Heart left ventricle (tissue), 16 donors: ENCODE measurements at regions of chr1 and their contacts with region 1.

Region 1: DNA sequence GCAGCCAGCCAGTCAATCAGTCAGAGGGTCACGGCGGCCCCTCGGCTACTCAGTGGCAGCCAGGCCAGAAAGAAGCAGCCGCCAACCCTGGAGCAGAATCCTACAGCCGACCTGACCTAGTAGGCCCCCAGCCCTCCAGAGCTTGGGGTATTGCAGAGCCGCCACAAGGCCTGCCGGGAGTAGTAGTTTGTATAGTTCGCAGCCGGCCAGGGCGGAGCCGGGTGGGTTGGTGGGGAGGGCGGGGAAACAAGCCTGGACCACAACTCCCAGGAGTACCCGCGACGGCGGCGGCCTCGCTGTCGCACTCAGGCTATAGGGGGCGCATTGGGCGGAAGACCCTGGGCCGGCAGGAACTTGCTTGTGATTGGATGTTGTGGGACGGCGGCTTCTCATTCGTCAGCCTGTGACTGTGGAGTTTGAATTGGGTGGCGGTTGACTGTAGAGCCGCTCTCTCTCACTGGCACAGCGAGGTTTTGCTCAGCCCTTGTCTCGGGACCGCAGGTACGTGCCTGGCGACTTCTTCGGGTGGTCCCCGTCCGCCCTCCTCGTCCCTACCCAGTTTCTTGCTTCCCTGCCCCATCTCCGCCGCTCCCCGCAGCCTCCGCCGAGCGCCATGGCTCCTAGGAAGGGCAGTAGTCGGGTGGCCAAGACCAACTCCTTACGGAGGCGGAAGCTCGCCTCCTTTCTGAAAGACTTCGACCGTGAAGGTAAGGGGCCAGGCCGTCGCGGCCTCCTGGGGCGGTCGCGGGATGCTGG is at the start of gene CDCA8:
- DNase-seq: peak; percentile 98 to 99 (median 98)
- ATAC-seq: peak; percentile 95 to 97 (median 96)
- H3K4me3 ChIP-seq: peak within 1 kb of the TSS; percentile 52 to 98 (median 80)
- H3K27ac ChIP-seq: peak within 1 kb of the TSS in 11 of 12 donors; percentile 67 to 92 (median 78)
- H3K4me1 ChIP-seq: peaks cover 11 to 39% (median 27%) of the 10 kb centered on the region in 12 donors
- H3K27me3 ChIP-seq: no peaks in the 10 kb centered on the region
- CTCF ChIP-seq: peak; percentile 31 to 95 (median 68)
- POLR2A ChIP-seq: peak in 1 of 2 donors; percentile 55
- total RNA-seq, gene CDCA8: 0.12 to 5.0 (median 0.36) TPM in 8 of 9 donors, not detected in the other

Region 2: DNA sequence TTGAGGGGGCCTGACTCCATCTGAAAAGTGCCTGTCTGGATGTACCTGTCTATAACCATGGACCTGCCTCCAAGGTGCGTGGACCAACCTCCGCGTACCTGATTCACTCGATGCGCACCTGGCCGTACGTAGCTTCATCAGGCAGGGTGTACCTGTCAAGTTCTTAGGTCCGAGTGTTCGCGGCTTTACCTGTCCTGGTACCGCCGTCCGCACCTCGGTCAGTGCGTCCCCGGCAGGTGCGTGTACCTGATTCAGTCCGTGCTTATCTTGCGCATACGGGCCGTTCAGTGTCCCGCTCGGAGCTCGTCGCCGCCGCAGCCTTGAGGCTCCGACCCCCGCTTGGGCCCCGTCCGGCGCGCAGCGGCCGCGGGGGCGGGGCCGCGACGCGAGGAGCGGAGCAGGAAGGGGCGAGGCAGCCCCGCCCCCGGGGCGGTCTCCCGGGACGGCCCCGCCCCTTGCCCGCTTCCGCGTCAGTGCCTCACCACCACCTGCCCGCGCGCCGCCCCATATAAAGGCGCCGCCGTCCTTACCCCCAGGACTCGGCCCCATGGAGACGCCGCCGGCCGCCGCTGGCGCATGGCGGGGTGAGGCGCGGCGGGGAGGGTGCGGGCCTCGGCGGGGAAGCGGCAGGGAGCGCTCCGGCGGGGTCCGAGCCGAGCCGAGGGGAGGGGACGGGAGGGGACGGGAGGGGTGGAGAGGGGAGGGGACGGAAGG is 218.1 kb before region 1 on chr1 and contains the start of gene ZC3H12A:
- intact Hi-C with region 1: loop called in 1 of 10 experiments (anchors 5 kb)
- DNase-seq: peak; percentile 90 to 95 (median 92)
- ATAC-seq: peak; percentile 77 to 90 (median 82)
- H3K4me3 ChIP-seq: peak within 1 kb of the TSS; percentile 60 to 93 (median 85)
- H3K27ac ChIP-seq: peak within 1 kb of the TSS; percentile 59 to 96 (median 94)
- H3K4me1 ChIP-seq: peaks cover 20 to 85% (median 65%) of the 10 kb centered on the region in 12 donors
- H3K27me3 ChIP-seq: no peaks in the 10 kb centered on the region
- CTCF ChIP-seq: no peak
- POLR2A ChIP-seq: peak; percentile 63 to 98
- total RNA-seq, gene ZC3H12A: 1.8 to 8.5 (median 4.5) TPM

Region 3: GRCh38 chr1:37595440-37596319 is 96.6 kb before region 1 on chr1 and contains the start of gene GNL2:
- intact Hi-C with region 1: loop called in 1 of 10 experiments (anchors 5 kb)
- DNase-seq: peak; percentile 97 to 99 (median 98)
- ATAC-seq: peak; percentile 100
- H3K4me3 ChIP-seq: peak within 1 kb of the TSS; percentile 61 to 88 (median 74)
- H3K27ac ChIP-seq: peak within 1 kb of the TSS in 11 of 12 donors; percentile 50 to 84 (median 75)
- H3K4me1 ChIP-seq: peaks cover 2 to 24% (median 16%) of the 10 kb centered on the region in 12 donors
- H3K27me3 ChIP-seq: no peaks in the 10 kb centered on the region
- CTCF ChIP-seq: no peak
- POLR2A ChIP-seq: peak in 1 of 2 donors; percentile 78
- total RNA-seq, gene GNL2: 19.4 to 29.7 (median 23.8) TPM

Region 4: GRCh38 chr1:37793773-37794371 is 101.6 kb after region 1 on chr1 and contains the start of gene MANEAL:
- intact Hi-C with region 1: loop called in 1 of 10 experiments (anchors 10 kb)
- DNase-seq: peak; percentile 33 to 67 (median 42)
- ATAC-seq: peak; percentile 45 to 90 (median 82)
- H3K4me3 ChIP-seq: peak within 1 kb of the TSS; percentile 25 to 76 (median 58)
- H3K27ac ChIP-seq: no peak within 1 kb of the TSS
- H3K4me1 ChIP-seq: peaks cover 0 to 20% (median 13%) of the 10 kb centered on the region in 12 donors
- H3K27me3 ChIP-seq: peaks cover 0 to 18% (median under 1%) of the 10 kb centered on the region in 9 donors
- CTCF ChIP-seq: no peak
- POLR2A ChIP-seq: no peak
- total RNA-seq, gene MANEAL: 0.63 to 2.9 (median 1.1) TPM

Region 5: DNA sequence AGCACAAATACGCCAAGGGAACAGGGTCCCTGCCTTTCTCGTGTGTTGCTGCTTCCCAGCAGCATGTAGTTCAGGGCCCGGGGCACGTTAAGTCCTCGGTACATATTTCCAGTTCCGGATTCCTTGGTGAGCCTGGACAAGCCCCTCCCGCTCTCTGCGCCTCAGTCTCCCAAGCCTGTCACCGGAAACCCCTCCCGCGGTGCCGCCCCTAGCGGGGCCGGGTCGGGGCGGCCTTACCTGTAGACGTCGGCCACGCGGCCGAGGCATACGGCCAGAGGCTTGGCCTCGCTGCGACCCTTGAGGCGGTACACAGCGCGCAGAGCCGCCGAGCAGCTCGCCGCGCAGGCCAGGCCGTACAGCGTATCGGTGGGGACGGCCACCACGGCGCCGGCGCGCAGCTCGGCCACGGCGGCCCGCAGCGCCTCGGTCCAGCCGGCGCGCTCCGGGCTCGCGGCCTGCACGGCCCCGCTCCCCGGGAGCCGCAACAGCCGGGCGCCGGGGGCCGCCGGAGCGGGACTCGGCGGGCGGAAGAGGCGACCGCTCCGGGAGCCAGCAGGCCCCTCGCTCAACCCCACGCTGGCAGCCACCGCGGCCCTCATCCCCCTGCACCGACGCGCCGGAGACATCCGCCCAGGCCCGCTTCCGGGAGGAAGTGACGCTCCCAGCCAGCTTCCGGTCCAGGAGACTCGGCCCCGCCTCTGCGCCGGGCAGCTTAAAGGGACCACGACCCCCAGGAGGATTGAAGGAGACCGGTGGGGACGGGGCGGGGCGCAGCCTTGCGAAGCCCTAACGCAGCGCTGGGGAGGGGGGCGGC is 115.5 kb after region 1 on chr1 and contains the starts of genes C1orf122 and YRDC:
- intact Hi-C with region 1: loop called in 6 of 10 experiments (anchors 5 to 10 kb)
- DNase-seq: peak; percentile 94 to 97 (median 96)
- ATAC-seq: peak; percentile 91 to 96 (median 96)
- H3K4me3 ChIP-seq: peak within 1 kb of the TSS; percentile 72 to 99 (median 91)
- H3K27ac ChIP-seq: peak within 1 kb of the TSS; percentile 90 to 99 (median 96)
- H3K4me1 ChIP-seq: peaks cover 8 to 41% (median 28%) of the 10 kb centered on the region in 12 donors
- H3K27me3 ChIP-seq: no peaks in the 10 kb centered on the region
- CTCF ChIP-seq: no peak
- POLR2A ChIP-seq: peak in 1 of 2 donors; percentile 72
- total RNA-seq, gene C1orf122: 29.1 to 93.0 (median 44.0) TPM
- total RNA-seq, gene YRDC: 4.0 to 8.9 (median 6.1) TPM

Region 6: DNA sequence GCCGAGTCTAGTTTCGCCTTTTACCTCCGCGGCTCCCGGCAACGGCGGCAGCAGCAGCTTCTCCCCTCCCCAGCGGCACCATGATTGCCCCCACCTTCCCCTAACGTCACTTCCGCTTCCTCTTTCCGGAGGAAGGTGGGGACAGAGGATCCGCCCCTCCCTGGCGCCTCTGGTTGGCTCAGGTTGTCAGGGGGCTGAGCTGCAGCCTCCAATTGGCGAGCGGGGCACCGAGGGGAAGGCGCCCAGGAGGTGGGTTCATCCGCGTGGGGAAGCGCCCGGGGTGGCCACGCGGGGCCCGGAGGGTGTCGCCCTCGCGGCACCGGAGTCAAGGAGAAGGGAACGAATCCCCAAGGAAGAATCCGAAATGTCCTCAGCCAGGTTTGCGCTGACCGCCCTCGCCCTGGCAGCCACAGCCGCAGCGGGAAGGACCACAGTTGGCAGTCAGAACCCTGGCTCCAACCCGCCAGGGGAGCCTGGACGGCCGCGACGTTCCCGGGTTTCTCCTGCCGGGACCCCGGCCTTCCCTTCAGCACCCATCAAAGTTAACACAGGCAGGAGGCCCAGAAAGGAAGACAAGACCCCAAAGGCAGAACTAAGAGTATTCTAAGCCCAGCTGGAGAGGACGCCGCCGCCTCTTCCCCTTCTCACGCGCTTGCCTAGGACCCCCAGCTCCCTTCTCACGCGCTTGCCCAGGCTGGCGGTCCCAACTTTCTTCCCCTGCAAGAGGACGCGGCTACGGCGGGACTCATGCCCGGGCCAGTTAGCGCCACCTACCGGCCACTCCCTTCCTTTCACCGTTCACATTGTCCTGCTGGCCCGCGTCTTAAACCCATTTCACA is 167.5 kb after region 1 on chr1 and contains the start of gene MTF1:
- intact Hi-C with region 1: loop called in 6 of 10 experiments (anchors 1 to 10 kb)
- DNase-seq: peak; percentile 98 to 99 (median 98)
- ATAC-seq: peak; percentile 99
- H3K4me3 ChIP-seq: peak within 1 kb of the TSS; percentile 60 to 98 (median 86)
- H3K27ac ChIP-seq: peak within 1 kb of the TSS; percentile 22 to 97 (median 93)
- H3K4me1 ChIP-seq: peaks cover 0 to 47% (median 32%) of the 10 kb centered on the region in 12 donors
- H3K27me3 ChIP-seq: no peaks in the 10 kb centered on the region
- CTCF ChIP-seq: peak; percentile 85 to 97 (median 92)
- POLR2A ChIP-seq: peak in 1 of 2 donors; percentile 87
- total RNA-seq, gene MTF1: 4.2 to 19.5 (median 12.4) TPM